GM10248 (cell line): ENCODE measurements at regions of chr20 and their contacts with region 1.

Region 1: DNA sequence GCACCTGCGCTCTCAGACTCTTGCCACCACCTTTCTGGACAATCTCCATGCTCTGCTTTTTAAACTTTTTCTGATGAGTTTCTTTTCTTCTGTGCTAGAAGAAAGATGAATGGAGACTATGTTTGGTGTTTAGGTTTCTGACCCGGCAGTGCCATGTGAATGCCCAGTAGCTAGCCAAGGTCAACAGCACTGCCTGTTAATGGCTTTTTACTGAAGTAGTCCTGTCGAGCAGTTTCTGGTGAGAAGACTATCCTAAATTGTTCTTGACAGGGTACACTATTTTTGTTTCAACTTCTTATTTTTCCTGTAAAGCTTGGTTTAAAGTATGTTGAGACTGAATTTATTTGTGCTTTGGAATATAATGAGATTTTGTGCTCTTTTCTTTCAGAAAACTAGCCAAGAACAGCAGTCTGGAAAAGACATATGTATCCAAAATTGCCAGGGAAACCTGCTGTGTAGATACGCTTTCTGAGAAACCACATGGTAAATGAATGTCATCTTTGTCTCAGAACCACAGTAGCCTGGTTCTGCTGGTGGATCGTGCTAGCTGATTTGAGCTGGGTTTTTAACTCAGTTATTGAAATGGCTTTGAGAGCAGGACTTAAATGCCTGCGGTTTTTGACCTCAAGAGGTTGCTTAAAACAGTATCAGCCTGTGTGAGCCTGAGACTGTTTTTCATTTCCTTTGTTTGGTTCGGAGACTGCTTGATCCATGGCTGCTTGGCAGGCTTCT is 48.1 kb downstream of the KCNS1 start:
- DNase-seq: peak; percentile 27
- CTCF ChIP-seq: no peak

Region 2: DNA sequence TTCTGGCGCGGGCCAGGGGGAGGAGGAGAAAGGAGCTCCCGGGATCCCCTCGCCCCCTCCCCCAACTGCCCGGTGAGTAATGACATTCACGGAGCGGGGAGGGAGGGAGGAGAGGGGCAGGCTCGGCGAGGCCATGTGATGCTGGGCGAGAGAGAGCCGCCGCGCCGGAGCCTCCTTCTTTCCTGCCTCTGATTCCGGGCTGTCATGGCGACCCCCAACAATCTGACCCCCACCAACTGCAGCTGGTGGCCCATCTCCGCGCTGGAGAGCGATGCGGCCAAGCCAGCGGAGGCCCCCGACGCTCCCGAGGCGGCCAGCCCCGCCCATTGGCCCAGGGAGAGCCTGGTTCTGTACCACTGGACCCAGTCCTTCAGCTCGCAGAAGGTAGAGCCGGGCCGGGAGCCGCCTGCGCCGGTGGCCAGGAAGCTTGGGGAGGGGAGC is 805.7 kb before region 1 on chr20 and contains the start of gene GDAP1L1:
- CTCF ChIA-PET with region 1: no interaction called
- POLR2A ChIA-PET with region 1: no interaction called
- DNase-seq: no peak
- CTCF ChIP-seq: no peak

Region 3: GRCh38 chr20:45070932-45071632 is 18.2 kb after region 1 on chr20:
- CTCF ChIA-PET with region 1: interaction called, 17 read pairs
- POLR2A ChIA-PET with region 1: no interaction called
- DNase-seq: no peak
- CTCF ChIP-seq: no peak